CD4-positive, alpha-beta T cell (primary cell): ENCODE measurements at regions of chr2 and their contacts with region 1.

Region 1: GRCh38 chr2:74919827-74920226 is 38.6 kb upstream of the POLE4 start:
- DNase-seq: peak; percentile 58 to 82 (median 65)
- ATAC-seq: peak; percentile 82
- H3K4me3 ChIP-seq: no peak overlapping the region
- H3K4me3 Mint-ChIP-seq: no peak overlapping the region
- H3K27ac ChIP-seq: no peak overlapping the region
- H3K27ac Mint-ChIP-seq: no peak overlapping the region
- H3K4me1 ChIP-seq: peaks cover 13% of the 10 kb centered on the region
- H3K4me1 Mint-ChIP-seq: peaks cover 11% of the 10 kb centered on the region
- H3K27me3 ChIP-seq: peaks cover 0 to 7% of the 10 kb centered on the region in 2 experiments
- H3K27me3 Mint-ChIP-seq: peaks cover 10% of the 10 kb centered on the region
- CTCF ChIP-seq: peak; percentile 89

Region 2: GRCh38 chr2:74515981-74516633 is 403.7 kb before region 1 on chr2:
- CTCF ChIA-PET with region 1: no interaction called
- POLR2A ChIA-PET with region 1: no interaction called
- intact Hi-C with region 1: no loop called
- DNase-seq: peak; percentile 54 to 85 (median 68)
- ATAC-seq: peak; percentile 80
- H3K4me3 ChIP-seq: peak overlapping the region; percentile 54
- H3K4me3 Mint-ChIP-seq: peak overlapping the region; percentile 85
- H3K27ac ChIP-seq: no peak overlapping the region
- H3K27ac Mint-ChIP-seq: no peak overlapping the region
- H3K4me1 ChIP-seq: peaks cover 40% of the 10 kb centered on the region
- H3K4me1 Mint-ChIP-seq: peaks cover 18% of the 10 kb centered on the region
- H3K27me3 ChIP-seq: peaks cover 78 to 84% of the 10 kb centered on the region in 2 experiments
- H3K27me3 Mint-ChIP-seq: peaks cover 92% of the 10 kb centered on the region
- CTCF ChIP-seq: no peak

Region 3: GRCh38 chr2:75064691-75065396 is 145.0 kb after region 1 on chr2:
- CTCF ChIA-PET with region 1: no interaction called
- POLR2A ChIA-PET with region 1: no interaction called
- intact Hi-C with region 1: loop called in 1 of 2 experiments (anchors 5 kb)
- DNase-seq: peak; percentile 8 to 66 (median 28)
- ATAC-seq: no peak
- H3K4me3 ChIP-seq: no peak overlapping the region
- H3K4me3 Mint-ChIP-seq: no peak overlapping the region
- H3K27ac ChIP-seq: no peak overlapping the region
- H3K27ac Mint-ChIP-seq: no peak overlapping the region
- H3K4me1 ChIP-seq: no peaks in the 10 kb centered on the region
- H3K4me1 Mint-ChIP-seq: no peaks in the 10 kb centered on the region
- H3K27me3 ChIP-seq: no peaks in the 10 kb centered on the region
- H3K27me3 Mint-ChIP-seq: peaks cover 6% of the 10 kb centered on the region
- CTCF ChIP-seq: peak; percentile 83

Region 4: GRCh38 chr2:75130171-75130570 is 210.3 kb after region 1 on chr2:
- CTCF ChIA-PET with region 1: no interaction called
- POLR2A ChIA-PET with region 1: no interaction called
- intact Hi-C with region 1: no loop called
- DNase-seq: no peak
- ATAC-seq: no peak
- H3K4me3 ChIP-seq: no peak overlapping the region
- H3K4me3 Mint-ChIP-seq: no peak overlapping the region
- H3K27ac ChIP-seq: no peak overlapping the region
- H3K27ac Mint-ChIP-seq: no peak overlapping the region
- H3K4me1 ChIP-seq: no peaks in the 10 kb centered on the region
- H3K4me1 Mint-ChIP-seq: no peaks in the 10 kb centered on the region
- H3K27me3 ChIP-seq: no peaks in the 10 kb centered on the region
- H3K27me3 Mint-ChIP-seq: no peaks in the 10 kb centered on the region
- CTCF ChIP-seq: no peak

Region 5: DNA sequence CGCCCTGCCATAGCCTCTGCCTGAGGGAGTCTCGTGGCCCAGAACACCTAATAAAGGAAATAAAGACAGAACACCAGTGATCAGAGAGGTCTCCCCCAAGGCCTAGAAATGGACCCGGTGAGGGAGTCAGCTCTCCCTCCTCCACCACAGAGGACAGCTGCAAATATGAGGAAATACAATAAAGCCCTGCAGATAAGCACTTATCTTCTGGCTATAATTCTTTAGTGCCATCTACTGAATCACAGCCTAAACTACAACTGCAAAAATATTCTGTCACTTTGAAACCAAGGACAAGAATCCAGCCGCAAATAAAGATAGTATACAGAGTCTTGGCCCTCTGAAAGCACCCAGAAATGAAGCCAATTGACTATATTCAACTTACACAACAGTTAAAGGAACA is 321.9 kb after region 1 on chr2:
- CTCF ChIA-PET with region 1: interaction called, 3 read pairs
- POLR2A ChIA-PET with region 1: no interaction called
- intact Hi-C with region 1: loop called in 1 of 2 experiments (anchors 5 kb)
- DNase-seq: no peak
- ATAC-seq: no peak
- H3K4me3 ChIP-seq: no peak overlapping the region
- H3K4me3 Mint-ChIP-seq: no peak overlapping the region
- H3K27ac ChIP-seq: no peak overlapping the region
- H3K27ac Mint-ChIP-seq: no peak overlapping the region
- H3K4me1 ChIP-seq: no peaks in the 10 kb centered on the region
- H3K4me1 Mint-ChIP-seq: no peaks in the 10 kb centered on the region
- H3K27me3 ChIP-seq: no peaks in the 10 kb centered on the region
- H3K27me3 Mint-ChIP-seq: peaks cover 4% of the 10 kb centered on the region
- CTCF ChIP-seq: no peak

Region 6: DNA sequence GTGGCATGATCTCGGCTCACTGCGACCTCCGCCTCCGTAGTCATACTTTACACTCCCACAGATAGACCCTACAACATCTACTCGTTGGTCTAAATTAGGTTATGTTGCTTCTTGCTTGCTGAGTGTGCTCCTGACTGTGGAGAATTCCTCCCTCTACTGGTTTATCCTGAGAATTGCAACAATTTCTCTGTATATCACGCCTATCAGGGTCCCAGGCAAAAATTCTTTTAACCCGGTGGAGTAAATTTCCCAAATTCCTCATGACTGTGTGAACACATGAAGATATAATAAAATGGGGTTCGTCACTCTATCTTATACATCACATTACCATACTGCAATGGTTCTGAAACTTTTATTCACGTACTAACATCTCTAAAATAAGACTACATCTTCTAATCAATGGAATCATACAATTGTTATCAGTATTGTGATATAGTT is 484.2 kb after region 1 on chr2:
- CTCF ChIA-PET with region 1: interaction called, 6 read pairs
- POLR2A ChIA-PET with region 1: no interaction called
- intact Hi-C with region 1: loop called (anchors 1 kb)
- DNase-seq: peak in 3 of 14 experiments; percentile 44 to 60 (median 55)
- ATAC-seq: peak; percentile 61
- H3K4me3 ChIP-seq: no peak overlapping the region
- H3K4me3 Mint-ChIP-seq: no peak overlapping the region
- H3K27ac ChIP-seq: no peak overlapping the region
- H3K27ac Mint-ChIP-seq: no peak overlapping the region
- H3K4me1 ChIP-seq: no peaks in the 10 kb centered on the region
- H3K4me1 Mint-ChIP-seq: peaks cover 5% of the 10 kb centered on the region
- H3K27me3 ChIP-seq: no peaks in the 10 kb centered on the region
- H3K27me3 Mint-ChIP-seq: peaks cover 10% of the 10 kb centered on the region
- CTCF ChIP-seq: peak; percentile 78

Region 7: DNA sequence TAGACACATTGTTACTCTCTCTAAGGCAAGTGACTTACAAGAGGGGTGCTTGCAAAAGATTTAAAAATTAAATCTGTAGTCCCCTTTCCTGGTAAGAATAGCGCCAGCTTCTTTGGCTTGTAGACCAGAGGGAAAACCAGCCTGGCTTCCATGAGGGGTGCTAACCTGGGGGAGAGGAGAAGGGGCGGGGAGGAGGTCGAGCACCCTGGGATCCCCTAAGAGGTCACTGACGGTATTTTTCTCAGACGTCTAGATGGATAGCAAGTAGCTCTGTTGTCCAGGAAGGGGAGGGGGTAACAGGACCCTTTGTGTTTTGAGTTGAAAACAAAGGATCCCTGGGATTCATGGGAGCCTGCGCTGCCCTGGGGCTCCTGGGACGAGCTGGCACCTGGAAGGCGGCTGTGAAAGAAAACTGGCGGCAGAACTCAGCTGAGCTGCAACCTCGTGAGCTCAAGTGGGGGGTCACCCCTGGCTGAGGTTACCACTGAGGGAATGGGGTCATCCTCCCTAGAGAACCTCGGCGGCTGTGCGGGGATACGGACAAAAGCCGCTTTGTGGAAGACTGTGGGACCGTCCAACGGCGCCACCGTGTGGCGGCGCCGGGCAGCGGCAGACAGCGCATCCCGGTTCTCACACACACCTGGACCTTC is 689.0 kb after region 1 on chr2:
- CTCF ChIA-PET with region 1: interaction called, 4 read pairs
- POLR2A ChIA-PET with region 1: no interaction called
- intact Hi-C with region 1: loop called (anchors 1 kb)
- DNase-seq: peak; percentile 20 to 68 (median 36)
- ATAC-seq: peak; percentile 71
- H3K4me3 ChIP-seq: no peak overlapping the region
- H3K4me3 Mint-ChIP-seq: no peak overlapping the region
- H3K27ac ChIP-seq: no peak overlapping the region
- H3K27ac Mint-ChIP-seq: no peak overlapping the region
- H3K4me1 ChIP-seq: peaks cover 4% of the 10 kb centered on the region
- H3K4me1 Mint-ChIP-seq: no peaks in the 10 kb centered on the region
- H3K27me3 ChIP-seq: peaks cover 27 to 28% of the 10 kb centered on the region in 2 experiments
- H3K27me3 Mint-ChIP-seq: peaks cover 81% of the 10 kb centered on the region
- CTCF ChIP-seq: peak; percentile 84

Region 8: GRCh38 chr2:75627895-75628504 is 708.2 kb after region 1 on chr2:
- CTCF ChIA-PET with region 1: no interaction called
- POLR2A ChIA-PET with region 1: no interaction called
- intact Hi-C with region 1: loop called (anchors 1 to 2 kb)
- DNase-seq: peak; percentile 13 to 70 (median 41)
- ATAC-seq: peak; percentile 65
- H3K4me3 ChIP-seq: no peak overlapping the region
- H3K4me3 Mint-ChIP-seq: no peak overlapping the region
- H3K27ac ChIP-seq: no peak overlapping the region
- H3K27ac Mint-ChIP-seq: no peak overlapping the region
- H3K4me1 ChIP-seq: no peaks in the 10 kb centered on the region
- H3K4me1 Mint-ChIP-seq: no peaks in the 10 kb centered on the region
- H3K27me3 ChIP-seq: peaks cover 5 to 10% of the 10 kb centered on the region in 2 experiments
- H3K27me3 Mint-ChIP-seq: peaks cover 63% of the 10 kb centered on the region
- CTCF ChIP-seq: peak; percentile 92